Ovary (tissue), 10 donors: ENCODE measurements at regions of chr14 and their contacts with region 1.

Region 1: DNA sequence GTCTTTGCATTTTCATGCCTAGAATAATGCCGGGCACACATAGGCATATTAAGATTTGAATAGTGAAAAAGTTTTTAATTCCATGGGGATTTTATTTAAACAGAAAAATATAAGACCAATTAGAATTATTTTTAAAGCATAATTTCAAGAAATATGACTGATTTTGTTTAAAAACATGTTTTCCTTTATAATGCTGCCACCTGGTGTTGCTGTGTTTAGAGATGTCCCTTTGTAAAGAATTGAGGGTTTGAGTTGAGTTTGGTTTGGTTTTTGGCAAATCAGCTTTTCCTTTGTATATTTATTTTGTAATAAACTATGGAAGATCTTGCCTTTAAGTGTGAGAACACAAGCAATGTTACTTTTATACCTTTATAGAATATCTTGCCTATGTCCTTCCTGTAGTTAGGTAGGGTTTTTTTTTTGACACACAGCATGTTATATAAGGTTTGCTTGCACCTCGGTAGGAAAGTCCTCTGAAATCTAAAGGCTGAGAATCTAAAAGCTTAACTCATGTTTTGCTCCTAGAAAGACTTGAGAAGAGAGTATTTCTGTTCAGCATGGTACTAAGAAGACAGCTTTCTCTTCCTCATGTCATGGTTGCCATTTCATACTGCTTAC is 31.4 kb upstream of the SNAPC1 start:
- DNase-seq: no peak
- H3K4me3 ChIP-seq: no peak overlapping the region
- H3K27ac ChIP-seq: no peak overlapping the region
- H3K4me1 ChIP-seq: no peaks in the 10 kb centered on the region
- H3K27me3 ChIP-seq: no peaks in the 10 kb centered on the region
- CTCF ChIP-seq: peak in 2 of 3 donors; percentile 33 to 69
- EP300 ChIP-seq: no peak
- POLR2A ChIP-seq: no peak

Region 2: GRCh38 chr14:61188978-61189808 is 541.7 kb before region 1 on chr14:
- intact Hi-C with region 1: no loop called
- DNase-seq: peak; percentile 49 to 77 (median 57)
- H3K4me3 ChIP-seq: peak overlapping the region; percentile 36
- H3K27ac ChIP-seq: no peak overlapping the region
- H3K4me1 ChIP-seq: peaks cover 1% of the 10 kb centered on the region
- H3K27me3 ChIP-seq: no peaks in the 10 kb centered on the region
- CTCF ChIP-seq: peak in 1 of 3 donors; percentile 28
- EP300 ChIP-seq: no peak
- POLR2A ChIP-seq: no peak

Region 3: DNA sequence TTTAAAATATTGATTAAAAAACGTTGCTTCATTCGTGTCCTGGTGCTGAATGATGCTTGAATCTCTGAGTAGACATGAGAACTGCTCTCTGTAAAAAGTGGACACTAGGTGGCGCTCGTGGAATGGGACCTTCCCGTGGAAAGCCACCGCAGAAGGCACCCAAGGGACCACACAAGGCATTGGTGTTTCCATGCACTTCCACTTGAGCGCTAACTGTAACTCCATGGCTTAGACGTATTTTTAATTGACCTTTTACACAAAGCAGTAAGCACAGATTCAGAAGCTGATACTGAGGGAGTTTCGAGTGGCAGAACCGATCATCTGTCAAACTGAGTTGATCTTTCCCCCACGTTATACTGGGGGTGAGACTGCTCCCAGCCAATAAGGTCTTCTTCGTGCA is 274.1 kb before region 1 on chr14:
- intact Hi-C with region 1: loop called in 3 of 4 experiments (anchors 2 to 10 kb)
- DNase-seq: peak; percentile 65 to 83 (median 68)
- H3K4me3 ChIP-seq: no peak overlapping the region
- H3K27ac ChIP-seq: no peak overlapping the region
- H3K4me1 ChIP-seq: no peaks in the 10 kb centered on the region
- H3K27me3 ChIP-seq: no peaks in the 10 kb centered on the region
- CTCF ChIP-seq: peak; percentile 53 to 70 (median 55)
- EP300 ChIP-seq: no peak
- POLR2A ChIP-seq: no peak

Region 4: DNA sequence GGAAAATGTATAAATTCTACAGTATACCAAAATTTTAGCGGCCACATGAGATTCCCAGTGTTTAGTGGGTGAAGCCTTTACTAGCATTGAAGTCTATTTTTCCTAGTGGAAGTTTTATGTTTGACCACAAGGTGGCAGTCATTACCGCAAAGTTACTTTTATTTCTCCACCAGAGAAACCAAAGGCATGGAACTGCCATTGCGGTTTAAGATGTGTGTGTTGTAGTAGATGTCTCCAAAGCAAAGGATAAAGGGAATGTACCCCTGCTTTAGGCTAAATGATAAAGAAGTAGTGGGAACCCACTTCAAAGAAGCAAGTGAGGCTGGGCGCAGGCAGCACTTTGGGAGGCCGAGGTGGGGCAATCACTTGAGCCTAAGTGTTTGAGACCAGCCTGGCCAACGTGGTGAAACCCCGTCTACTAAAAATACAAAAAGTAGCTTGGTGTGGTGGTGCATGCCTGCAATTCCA is 269.0 kb before region 1 on chr14:
- intact Hi-C with region 1: loop called in 3 of 4 experiments (anchors 2 to 10 kb)
- DNase-seq: peak in 1 of 5 donors; percentile 40
- H3K4me3 ChIP-seq: no peak overlapping the region
- H3K27ac ChIP-seq: no peak overlapping the region
- H3K4me1 ChIP-seq: peaks cover 4% of the 10 kb centered on the region
- H3K27me3 ChIP-seq: no peaks in the 10 kb centered on the region
- CTCF ChIP-seq: peak; percentile 68 to 88 (median 78)
- EP300 ChIP-seq: no peak
- POLR2A ChIP-seq: no peak